Naive thymus-derived CD4-positive, alpha-beta T cell (primary cell): ENCODE measurements at regions of chr7 and their contacts with region 1.

Region 1: GRCh38 chr7:100081535-100082102 is at the start of gene ZNF3:
- DNase-seq: peak; percentile 87 to 98 (median 97)
- ATAC-seq: peak; percentile 94
- H3K4me3 ChIP-seq: peak within 1 kb of the TSS; percentile 78
- H3K4me3 Mint-ChIP-seq: peak within 1 kb of the TSS; percentile 89 to 96 (median 92)
- H3K27ac ChIP-seq: peak within 1 kb of the TSS; percentile 82
- H3K27ac Mint-ChIP-seq: peak within 1 kb of the TSS; percentile 64 to 98 (median 91)
- H3K4me1 ChIP-seq: peaks cover 5 to 18% of the 10 kb centered on the region in 2 donors
- H3K4me1 Mint-ChIP-seq: peaks cover 26 to 46% (median 41%) of the 10 kb centered on the region in 7 donors
- H3K27me3 ChIP-seq: no peaks in the 10 kb centered on the region
- H3K27me3 Mint-ChIP-seq: peaks cover 0 to 19% (median 0%) of the 10 kb centered on the region in 5 donors
- total RNA-seq, gene ZNF3: 29.1 to 48.0 (median 35.0) TPM

Region 2: DNA sequence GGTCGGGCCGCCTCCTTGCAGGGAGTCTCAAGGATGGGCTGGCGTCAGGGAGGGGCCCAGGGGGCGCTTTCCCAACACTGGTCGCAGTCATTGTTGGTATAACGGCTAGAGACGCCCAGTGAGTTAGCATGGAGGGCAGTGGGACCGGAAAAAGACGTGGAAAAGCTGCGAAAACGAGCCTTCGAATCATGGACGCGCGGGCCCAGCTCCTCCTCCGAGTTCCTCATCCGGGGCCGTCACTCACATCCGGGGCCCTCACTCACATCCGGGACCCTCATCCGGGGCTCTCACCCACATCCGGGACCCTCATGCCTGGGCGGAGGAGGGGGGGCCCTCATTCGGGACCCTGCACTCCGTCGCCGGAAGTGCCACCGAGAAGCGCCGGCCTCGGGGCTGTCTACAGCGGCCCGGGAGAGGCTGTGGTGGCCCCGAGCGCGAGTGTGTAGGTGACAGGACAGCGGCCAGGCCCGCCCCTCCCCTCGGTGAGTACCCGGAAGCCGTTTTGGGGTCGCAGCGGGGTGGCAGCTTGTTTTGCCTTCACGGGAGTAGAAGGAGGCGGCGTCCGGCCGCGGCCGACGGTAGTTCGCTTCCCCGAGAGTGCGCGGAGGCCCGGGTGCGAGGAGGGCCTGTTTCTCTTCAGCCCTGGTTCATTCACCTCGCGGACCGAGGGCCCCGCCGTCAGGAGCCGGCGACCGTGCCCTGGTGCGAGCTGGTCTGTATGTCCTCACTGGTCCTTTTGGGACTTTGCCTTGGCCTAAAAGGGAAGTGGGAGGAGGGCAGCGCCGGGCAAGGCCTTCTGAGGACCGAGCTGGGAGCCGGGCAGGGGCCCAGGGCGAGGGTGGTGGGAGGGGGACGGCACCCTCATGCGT is 523.1 kb before region 1 on chr7 and contains the start of gene ZNF655:
- CTCF ChIA-PET with region 1: no interaction called
- POLR2A ChIA-PET with region 1: no interaction called
- intact Hi-C with region 1: loop called in 1 of 2 experiments (anchors 5 kb)
- DNase-seq: peak; percentile 85 to 96 (median 93)
- ATAC-seq: peak; percentile 89
- H3K4me3 ChIP-seq: peak within 1 kb of the TSS; percentile 85
- H3K4me3 Mint-ChIP-seq: peak within 1 kb of the TSS; percentile 94 to 100 (median 97)
- H3K27ac ChIP-seq: peak within 1 kb of the TSS; percentile 99
- H3K27ac Mint-ChIP-seq: peak within 1 kb of the TSS; percentile 95 to 100 (median 99)
- H3K4me1 ChIP-seq: peaks cover 24 to 25% of the 10 kb centered on the region in 2 donors
- H3K4me1 Mint-ChIP-seq: peaks cover 32 to 69% (median 51%) of the 10 kb centered on the region in 7 donors
- H3K27me3 ChIP-seq: no peaks in the 10 kb centered on the region
- H3K27me3 Mint-ChIP-seq: no peaks in the 10 kb centered on the region
- total RNA-seq, gene ZNF655: 110 to 165 (median 157) TPM

Region 3: DNA sequence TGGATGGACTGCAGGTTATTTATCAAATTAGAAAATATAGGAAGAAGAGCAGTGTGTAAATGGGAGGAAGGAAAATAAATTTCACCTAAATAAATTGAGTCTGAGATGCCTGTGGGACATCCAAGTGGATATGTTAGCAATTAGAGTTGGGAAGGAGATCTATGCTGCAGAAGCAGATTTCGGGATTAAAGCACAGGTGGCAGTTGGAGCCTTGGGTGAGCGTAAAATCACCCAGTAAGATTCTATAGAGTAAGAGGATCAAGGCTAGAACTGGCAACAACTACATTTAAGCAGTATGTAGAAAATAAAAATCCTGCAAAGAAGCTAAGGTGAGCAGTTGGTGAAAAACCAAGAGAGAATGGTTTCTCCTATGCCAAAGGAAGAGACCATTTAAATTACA is 170.6 kb before region 1 on chr7:
- CTCF ChIA-PET with region 1: interaction called, 3 read pairs
- POLR2A ChIA-PET with region 1: no interaction called
- intact Hi-C with region 1: loop called (anchors 1 kb)
- DNase-seq: no peak
- ATAC-seq: no peak
- H3K4me3 ChIP-seq: no peak overlapping the region
- H3K4me3 Mint-ChIP-seq: peak overlapping the region in 4 of 10 donors; percentile 17 to 49 (median 35)
- H3K27ac ChIP-seq: no peak overlapping the region
- H3K27ac Mint-ChIP-seq: peak overlapping the region in 3 of 9 donors; percentile 28 to 71 (median 64)
- H3K4me1 ChIP-seq: peaks cover 6 to 13% of the 10 kb centered on the region in 2 donors
- H3K4me1 Mint-ChIP-seq: peaks cover 22 to 82% (median 68%) of the 10 kb centered on the region in 7 donors
- H3K27me3 ChIP-seq: no peaks in the 10 kb centered on the region
- H3K27me3 Mint-ChIP-seq: no peaks in the 10 kb centered on the region

Region 4: DNA sequence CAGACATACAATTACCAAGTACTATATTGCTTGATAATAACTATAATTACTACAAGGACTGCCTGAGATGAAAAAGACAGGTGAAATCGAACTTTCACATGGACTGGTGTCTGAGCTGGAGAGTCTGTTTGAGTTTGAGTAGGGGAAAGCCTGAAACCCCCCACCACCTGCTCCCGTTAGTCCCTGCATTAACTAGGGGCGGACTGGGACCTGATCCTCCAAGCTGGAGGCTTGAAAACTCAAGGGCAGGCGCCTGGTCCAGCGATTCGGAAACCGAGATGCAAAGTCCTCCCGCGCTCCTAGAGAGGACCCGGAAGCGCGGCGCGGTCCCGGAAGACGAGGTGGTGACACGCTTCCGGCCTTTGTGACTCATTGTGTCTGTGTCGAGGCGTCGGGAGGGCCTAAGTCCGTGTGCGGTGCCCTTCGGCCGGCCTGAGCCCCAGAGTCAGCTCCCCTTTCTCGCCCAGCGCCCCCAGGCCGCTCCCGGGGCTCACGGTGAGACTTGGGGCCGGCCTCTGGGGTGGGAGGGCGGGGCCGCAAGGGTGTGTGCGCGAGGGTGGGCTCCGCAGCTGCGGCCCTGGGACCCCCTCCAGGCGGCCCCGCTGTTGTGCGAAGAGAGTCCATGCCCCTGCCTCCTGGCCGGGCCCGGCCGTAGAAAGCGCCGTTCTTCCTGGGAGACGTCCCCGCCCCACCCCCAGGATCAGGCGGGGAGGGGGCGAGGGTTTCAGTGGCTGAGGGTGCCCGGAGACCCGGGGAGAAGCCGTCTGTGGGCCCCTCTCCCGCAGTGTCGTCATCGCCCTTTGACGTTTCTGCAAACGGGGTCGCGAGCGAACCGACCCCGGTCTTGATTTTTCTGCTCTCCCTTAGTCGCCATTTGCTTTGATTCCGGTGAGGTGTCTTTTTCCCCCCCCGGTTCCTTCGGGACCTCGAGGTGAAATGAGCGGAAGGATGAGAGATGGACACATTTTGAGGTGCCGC is 66.1 kb before region 1 on chr7 and contains the start of gene ZKSCAN1:
- CTCF ChIA-PET with region 1: interaction called, 3 read pairs
- POLR2A ChIA-PET with region 1: interaction called, 9 read pairs
- intact Hi-C with region 1: loop called (anchors 1 kb)
- DNase-seq: peak; percentile 68 to 86 (median 81)
- ATAC-seq: peak; percentile 99
- H3K4me3 ChIP-seq: peak within 1 kb of the TSS; percentile 51
- H3K4me3 Mint-ChIP-seq: peak within 1 kb of the TSS; percentile 92 to 98 (median 96)
- H3K27ac ChIP-seq: peak within 1 kb of the TSS; percentile 98
- H3K27ac Mint-ChIP-seq: peak within 1 kb of the TSS; percentile 91 to 98 (median 97)
- H3K4me1 ChIP-seq: peaks cover 19 to 22% of the 10 kb centered on the region in 2 donors
- H3K4me1 Mint-ChIP-seq: peaks cover 23 to 57% (median 44%) of the 10 kb centered on the region in 7 donors
- H3K27me3 ChIP-seq: no peaks in the 10 kb centered on the region
- H3K27me3 Mint-ChIP-seq: peaks cover 0 to 3% (median 0%) of the 10 kb centered on the region in 5 donors
- total RNA-seq, gene ZKSCAN1: 54.0 to 103 (median 70.1) TPM

Region 5: DNA sequence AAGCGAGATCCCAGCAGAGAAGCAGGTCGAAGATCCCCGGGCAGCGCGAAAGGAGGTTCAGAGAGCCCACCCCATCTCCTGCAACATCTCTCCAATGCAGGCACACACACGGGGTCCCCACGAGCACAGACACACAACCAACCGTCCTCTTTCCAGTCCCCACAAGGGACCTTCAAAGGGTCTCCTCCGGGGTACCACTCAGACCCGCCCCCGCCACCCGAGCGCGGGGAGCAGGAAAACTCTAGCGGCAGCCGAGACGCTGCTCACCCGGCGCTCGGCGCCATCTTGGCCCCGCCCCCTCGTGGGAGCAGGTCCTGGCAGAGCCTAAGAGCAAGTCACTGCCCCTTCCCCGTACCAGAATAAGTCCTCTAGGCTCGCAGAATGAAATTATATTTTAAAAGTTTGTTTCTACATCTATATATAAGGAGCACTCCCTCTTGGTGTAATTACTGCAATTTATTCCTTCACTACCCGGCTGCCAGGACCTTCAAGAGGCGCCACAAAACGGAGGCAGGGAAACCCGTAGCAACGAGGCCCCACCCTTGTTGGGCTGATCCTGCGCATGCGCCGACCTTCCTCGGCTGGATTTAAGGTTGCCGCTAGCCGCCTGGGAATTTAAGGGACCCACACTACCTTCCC is 37.6 kb after region 1 on chr7 and contains the starts of genes CNPY4 and TAF6:
- CTCF ChIA-PET with region 1: interaction called, 3 read pairs
- POLR2A ChIA-PET with region 1: interaction called, 9 read pairs
- intact Hi-C with region 1: loop called in 1 of 2 experiments (anchors 1 kb)
- DNase-seq: peak; percentile 88 to 97 (median 95)
- ATAC-seq: peak; percentile 88
- H3K4me3 ChIP-seq: peak within 1 kb of the TSS; percentile 100
- H3K4me3 Mint-ChIP-seq: peak within 1 kb of the TSS; percentile 90 to 100 (median 98)
- H3K27ac ChIP-seq: peak within 1 kb of the TSS; percentile 88
- H3K27ac Mint-ChIP-seq: peak within 1 kb of the TSS; percentile 97 to 99 (median 98)
- H3K4me1 ChIP-seq: peaks cover 12 to 19% of the 10 kb centered on the region in 2 donors
- H3K4me1 Mint-ChIP-seq: peaks cover 18 to 34% (median 28%) of the 10 kb centered on the region in 7 donors
- H3K27me3 ChIP-seq: no peaks in the 10 kb centered on the region
- H3K27me3 Mint-ChIP-seq: no peaks in the 10 kb centered on the region
- total RNA-seq, gene CNPY4: 22.1 to 68.2 (median 40.3) TPM
- total RNA-seq, gene TAF6: 39.5 to 68.1 (median 55.0) TPM

Region 6: GRCh38 chr7:100626530-100627237 is 545.1 kb after region 1 on chr7:
- CTCF ChIA-PET with region 1: no interaction called
- POLR2A ChIA-PET with region 1: no interaction called
- intact Hi-C with region 1: no loop called
- DNase-seq: peak; percentile 56 to 88 (median 81)
- ATAC-seq: peak; percentile 99
- H3K4me3 ChIP-seq: peak overlapping the region; percentile 58
- H3K4me3 Mint-ChIP-seq: peak overlapping the region; percentile 60 to 87 (median 76)
- H3K27ac ChIP-seq: peak overlapping the region; percentile 84
- H3K27ac Mint-ChIP-seq: peak overlapping the region; percentile 49 to 88 (median 75)
- H3K4me1 ChIP-seq: peaks cover 14 to 18% of the 10 kb centered on the region in 2 donors
- H3K4me1 Mint-ChIP-seq: peaks cover 26 to 58% (median 43%) of the 10 kb centered on the region in 7 donors
- H3K27me3 ChIP-seq: peaks cover 0 to 4% of the 10 kb centered on the region in 2 donors
- H3K27me3 Mint-ChIP-seq: no peaks in the 10 kb centered on the region

Region 7: GRCh38 chr7:101251871-101252659 is 1170.4 kb after region 1 on chr7:
- CTCF ChIA-PET with region 1: no interaction called
- POLR2A ChIA-PET with region 1: no interaction called
- intact Hi-C with region 1: loop called in 1 of 2 experiments (anchors 1 kb)
- DNase-seq: peak; percentile 95 to 98 (median 97)
- ATAC-seq: peak; percentile 100
- H3K4me3 ChIP-seq: peak overlapping the region; percentile 76
- H3K4me3 Mint-ChIP-seq: peak overlapping the region; percentile 94 to 100 (median 99)
- H3K27ac ChIP-seq: peak overlapping the region; percentile 87
- H3K27ac Mint-ChIP-seq: peak overlapping the region; percentile 90 to 99 (median 97)
- H3K4me1 ChIP-seq: peaks cover 13 to 16% of the 10 kb centered on the region in 2 donors
- H3K4me1 Mint-ChIP-seq: peaks cover 28 to 39% (median 32%) of the 10 kb centered on the region in 7 donors
- H3K27me3 ChIP-seq: no peaks in the 10 kb centered on the region
- H3K27me3 Mint-ChIP-seq: peaks cover 0 to 4% (median 0%) of the 10 kb centered on the region in 5 donors